ENCODE measurements at regions of chr1 and their contacts with region 1.

Region 1: GRCh38 chr1:230066466-230067404 is at the start of gene GALNT2:
- DNase-seq: peak; percentile 93 to 96
- H3K4me3 ChIP-seq: peak within 1 kb of the TSS; percentile 93
- H3K4me3 Mint-ChIP-seq: peak within 1 kb of the TSS; percentile 93
- H3K27ac Mint-ChIP-seq: peak within 1 kb of the TSS; percentile 70
- H3K4me1 ChIP-seq: peaks cover 6% of the 10 kb centered on the region; the same call in 1 of the 2 replicates
- H3K4me1 Mint-ChIP-seq: peaks cover 17% of the 10 kb centered on the region
- H3K27me3 ChIP-seq: no peaks in the 10 kb centered on the region
- H3K27me3 Mint-ChIP-seq: peaks cover 3% of the 10 kb centered on the region
- CTCF ChIP-seq: no peak
- total RNA-seq, gene GALNT2: 54.3 and 62.2 TPM in 2 replicates

Region 2: GRCh38 chr1:230104395-230105244 is 37.9 kb after region 1 on chr1:
- CTCF ChIA-PET with region 1: interaction called, 6 read pairs
- POLR2A ChIA-PET with region 1: no interaction called
- intact Hi-C with region 1: loop called (anchors 2 kb)
- DNase-seq: peak; percentile 56 to 73
- H3K4me3 ChIP-seq: no peak overlapping the region
- H3K4me3 Mint-ChIP-seq: peak overlapping the region; percentile 46
- H3K27ac Mint-ChIP-seq: peak overlapping the region; percentile 74
- H3K4me1 ChIP-seq: peaks cover 35% of the 10 kb centered on the region
- H3K4me1 Mint-ChIP-seq: peaks cover 22% of the 10 kb centered on the region
- H3K27me3 ChIP-seq: no peaks in the 10 kb centered on the region
- H3K27me3 Mint-ChIP-seq: no peaks in the 10 kb centered on the region
- CTCF ChIP-seq: no peak

Region 3: DNA sequence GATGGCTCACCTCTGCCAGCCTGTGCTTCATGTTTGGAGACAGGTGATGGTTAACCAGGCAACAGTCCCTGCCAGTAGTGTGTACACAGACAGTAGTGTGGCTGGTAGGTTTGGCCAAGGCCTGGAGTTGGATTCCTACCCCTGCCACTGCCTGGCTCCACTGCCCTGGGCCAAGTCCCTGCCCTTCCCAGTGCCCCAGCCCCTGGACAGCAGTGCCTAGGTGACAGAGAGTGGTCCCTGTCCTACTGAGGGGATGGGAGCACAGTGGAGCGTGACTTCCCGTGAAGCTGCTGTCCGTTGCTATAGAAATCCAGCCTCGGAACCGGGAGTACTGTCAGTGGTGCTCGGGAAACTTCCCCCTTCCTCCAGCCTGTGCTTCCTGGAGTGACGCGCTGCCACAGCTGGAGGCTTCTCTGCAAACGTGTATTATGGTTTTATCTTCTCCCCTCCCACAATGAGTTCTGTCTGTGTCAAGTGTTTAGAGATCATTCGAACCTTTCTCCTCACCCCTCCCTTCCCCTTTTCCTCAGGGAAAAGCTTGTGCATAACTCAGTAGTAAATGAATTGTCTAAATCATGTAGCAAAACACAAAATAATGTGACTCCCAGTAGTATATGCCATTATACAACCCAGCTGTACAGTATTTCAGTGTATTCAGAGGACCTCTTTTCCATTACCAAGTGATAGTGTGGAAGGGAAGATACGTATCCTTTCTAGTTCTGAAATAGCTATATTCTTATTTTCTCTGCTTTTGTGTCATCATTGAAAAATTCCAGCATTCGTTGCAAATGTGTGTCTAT is 73.7 kb after region 1 on chr1:
- CTCF ChIA-PET with region 1: no interaction called
- POLR2A ChIA-PET with region 1: no interaction called
- intact Hi-C with region 1: loop called (anchors 5 kb)
- DNase-seq: no peak
- H3K4me3 ChIP-seq: no peak overlapping the region
- H3K4me3 Mint-ChIP-seq: no peak overlapping the region
- H3K27ac Mint-ChIP-seq: no peak overlapping the region
- H3K4me1 ChIP-seq: peaks cover 13% of the 10 kb centered on the region; the same call in 1 of the 2 replicates
- H3K4me1 Mint-ChIP-seq: peaks cover 20% of the 10 kb centered on the region
- H3K27me3 ChIP-seq: no peaks in the 10 kb centered on the region
- H3K27me3 Mint-ChIP-seq: no peaks in the 10 kb centered on the region
- CTCF ChIP-seq: no peak

Region 4: GRCh38 chr1:230158415-230159291 is 91.9 kb after region 1 on chr1:
- CTCF ChIA-PET with region 1: no interaction called
- POLR2A ChIA-PET with region 1: no interaction called
- intact Hi-C with region 1: loop called (anchors 5 kb)
- DNase-seq: peak; percentile 75 to 83
- H3K4me3 ChIP-seq: no peak overlapping the region
- H3K4me3 Mint-ChIP-seq: peak overlapping the region; percentile 1
- H3K27ac Mint-ChIP-seq: peak overlapping the region; percentile 58
- H3K4me1 ChIP-seq: peaks cover 29% of the 10 kb centered on the region
- H3K4me1 Mint-ChIP-seq: peaks cover 23% of the 10 kb centered on the region
- H3K27me3 ChIP-seq: no peaks in the 10 kb centered on the region
- H3K27me3 Mint-ChIP-seq: no peaks in the 10 kb centered on the region
- CTCF ChIP-seq: no peak

Region 5: GRCh38 chr1:230215031-230215430 is 148.3 kb after region 1 on chr1:
- CTCF ChIA-PET with region 1: no interaction called
- POLR2A ChIA-PET with region 1: no interaction called
- intact Hi-C with region 1: loop called (anchors 5 kb)
- DNase-seq: peak in 1 of 2 experiments; percentile 14
- H3K4me3 ChIP-seq: no peak overlapping the region
- H3K4me3 Mint-ChIP-seq: no peak overlapping the region
- H3K27ac Mint-ChIP-seq: peak overlapping the region; percentile 3
- H3K4me1 ChIP-seq: peaks cover 32% of the 10 kb centered on the region
- H3K4me1 Mint-ChIP-seq: peaks cover 35% of the 10 kb centered on the region
- H3K27me3 ChIP-seq: no peaks in the 10 kb centered on the region
- H3K27me3 Mint-ChIP-seq: no peaks in the 10 kb centered on the region
- CTCF ChIP-seq: peak in 1 of 2 experiments; percentile 48

Region 6: DNA sequence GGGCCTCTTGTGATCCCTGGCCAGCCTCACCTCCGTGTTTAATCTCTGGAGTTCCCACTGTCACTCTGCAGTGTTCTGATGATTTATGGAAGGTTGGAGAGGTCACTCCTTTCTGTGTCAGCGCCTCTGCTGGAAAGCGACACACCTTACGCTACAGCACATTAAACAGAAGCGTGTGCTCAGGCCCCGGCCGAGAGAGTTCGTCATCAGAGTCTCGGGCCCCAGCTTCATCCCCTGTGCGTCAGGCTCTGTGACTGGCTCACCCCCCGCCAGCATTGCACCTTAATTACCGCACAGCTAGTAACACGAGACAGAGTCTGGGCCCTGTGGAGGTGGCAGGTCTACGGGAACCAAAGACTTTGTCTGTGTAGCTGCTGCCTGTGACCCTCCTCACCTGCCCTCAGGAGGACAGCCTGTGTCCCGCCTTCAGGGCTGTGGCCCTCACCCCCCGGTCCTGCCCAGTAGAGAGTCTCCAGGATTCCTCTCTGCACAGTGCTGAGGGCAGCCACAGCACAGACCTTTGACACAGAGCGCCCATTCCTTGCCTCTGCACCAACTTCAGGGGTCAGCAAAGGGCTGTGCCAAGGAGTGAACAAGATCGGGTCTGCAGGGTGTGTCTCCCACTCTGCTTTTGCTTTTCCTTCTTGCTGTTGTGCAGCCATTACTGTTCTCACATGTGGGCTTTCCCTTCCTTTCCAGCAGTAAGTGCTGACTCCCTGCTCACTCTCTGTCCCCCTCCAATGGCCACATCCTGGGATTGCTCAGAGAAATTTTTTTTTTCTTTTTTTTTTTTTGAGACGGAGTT is 201.8 kb after region 1 on chr1:
- CTCF ChIA-PET with region 1: no interaction called
- POLR2A ChIA-PET with region 1: no interaction called
- intact Hi-C with region 1: loop called (anchors 2 kb)
- DNase-seq: peak; percentile 64 to 67
- H3K4me3 ChIP-seq: no peak overlapping the region
- H3K4me3 Mint-ChIP-seq: no peak overlapping the region
- H3K27ac Mint-ChIP-seq: peak overlapping the region; percentile 66
- H3K4me1 ChIP-seq: peaks cover 13% of the 10 kb centered on the region; the same call in 1 of the 2 replicates
- H3K4me1 Mint-ChIP-seq: peaks cover 16% of the 10 kb centered on the region
- H3K27me3 ChIP-seq: no peaks in the 10 kb centered on the region
- H3K27me3 Mint-ChIP-seq: no peaks in the 10 kb centered on the region
- CTCF ChIP-seq: peak; percentile 53 to 71

Region 7: GRCh38 chr1:230407351-230407750 is 340.6 kb after region 1 on chr1:
- CTCF ChIA-PET with region 1: no interaction called
- POLR2A ChIA-PET with region 1: no interaction called
- intact Hi-C with region 1: no loop called
- DNase-seq: no peak
- H3K4me3 ChIP-seq: no peak overlapping the region
- H3K4me3 Mint-ChIP-seq: no peak overlapping the region
- H3K27ac Mint-ChIP-seq: no peak overlapping the region
- H3K4me1 ChIP-seq: no peaks in the 10 kb centered on the region
- H3K4me1 Mint-ChIP-seq: no peaks in the 10 kb centered on the region
- H3K27me3 ChIP-seq: no peaks in the 10 kb centered on the region; the same call in 1 of the 2 replicates
- H3K27me3 Mint-ChIP-seq: peaks cover 6% of the 10 kb centered on the region
- CTCF ChIP-seq: no peak